Activated T-helper 2 cell treated with anti-CD3 and anti-CD28 coated beads, Interferon-gamma antibody, Interleukin-2, Interleukin-4, amounts not matched to agents 10 μg/mL and 5 μg/mL and 100 μg/mL, durations not matched to agents 14 hours and 24 hours and 36 hours (primary cell): ENCODE measurements at regions of chr4 and their contacts with region 1.

Region 1: DNA sequence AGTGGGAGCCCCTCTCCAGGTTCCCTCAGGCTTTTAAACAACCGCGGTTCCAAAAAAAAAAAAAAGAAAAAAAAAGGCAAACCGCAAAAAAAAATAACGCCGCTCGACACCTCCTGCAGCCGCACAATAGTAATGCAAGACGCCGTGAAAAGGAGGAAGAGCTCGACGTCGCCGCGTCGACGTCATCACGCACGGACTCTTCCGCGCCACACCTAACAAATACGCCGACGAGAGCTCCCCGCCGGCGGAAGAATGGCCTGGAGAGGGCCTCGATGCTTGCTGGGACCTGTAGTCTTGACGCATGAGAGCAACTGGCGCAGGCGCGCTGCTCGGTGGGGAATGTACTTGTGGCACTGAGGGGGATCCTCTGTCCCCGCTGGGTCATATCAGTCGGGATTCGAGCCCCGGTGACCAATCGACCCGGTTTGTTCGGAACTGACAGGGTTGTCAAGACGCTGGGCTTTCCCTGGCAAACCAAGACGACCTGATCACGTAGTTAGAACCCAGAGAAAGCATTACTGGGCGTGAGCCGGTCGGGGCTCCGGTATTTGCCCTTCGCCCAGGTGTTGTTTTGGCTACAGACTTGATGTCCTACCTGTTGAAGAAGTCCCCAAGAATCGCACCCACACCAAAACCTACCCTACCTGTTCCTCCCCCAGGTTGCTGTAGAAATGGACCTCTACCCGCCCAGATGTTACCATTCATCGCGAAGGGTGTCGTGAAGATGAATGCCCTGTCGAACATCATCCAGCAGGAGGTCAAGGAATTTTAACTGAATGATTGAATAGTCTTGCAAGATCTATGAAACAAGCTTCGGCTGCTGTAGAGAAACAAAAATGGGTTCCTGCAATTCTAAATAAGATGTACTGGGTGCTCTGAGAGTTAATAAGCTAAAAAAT is at the start of gene CBR4:
- DNase-seq: peak; percentile 94
- H3K4me3 Mint-ChIP-seq: peak within 1 kb of the TSS; percentile 94
- H3K27ac Mint-ChIP-seq: peak within 1 kb of the TSS; percentile 94
- H3K4me1 Mint-ChIP-seq: peaks cover 33% of the 10 kb centered on the region
- H3K27me3 Mint-ChIP-seq: peaks cover 9% of the 10 kb centered on the region
- total RNA-seq, gene CBR4: 17.8 and 21.6 TPM in 2 replicates

Region 2: DNA sequence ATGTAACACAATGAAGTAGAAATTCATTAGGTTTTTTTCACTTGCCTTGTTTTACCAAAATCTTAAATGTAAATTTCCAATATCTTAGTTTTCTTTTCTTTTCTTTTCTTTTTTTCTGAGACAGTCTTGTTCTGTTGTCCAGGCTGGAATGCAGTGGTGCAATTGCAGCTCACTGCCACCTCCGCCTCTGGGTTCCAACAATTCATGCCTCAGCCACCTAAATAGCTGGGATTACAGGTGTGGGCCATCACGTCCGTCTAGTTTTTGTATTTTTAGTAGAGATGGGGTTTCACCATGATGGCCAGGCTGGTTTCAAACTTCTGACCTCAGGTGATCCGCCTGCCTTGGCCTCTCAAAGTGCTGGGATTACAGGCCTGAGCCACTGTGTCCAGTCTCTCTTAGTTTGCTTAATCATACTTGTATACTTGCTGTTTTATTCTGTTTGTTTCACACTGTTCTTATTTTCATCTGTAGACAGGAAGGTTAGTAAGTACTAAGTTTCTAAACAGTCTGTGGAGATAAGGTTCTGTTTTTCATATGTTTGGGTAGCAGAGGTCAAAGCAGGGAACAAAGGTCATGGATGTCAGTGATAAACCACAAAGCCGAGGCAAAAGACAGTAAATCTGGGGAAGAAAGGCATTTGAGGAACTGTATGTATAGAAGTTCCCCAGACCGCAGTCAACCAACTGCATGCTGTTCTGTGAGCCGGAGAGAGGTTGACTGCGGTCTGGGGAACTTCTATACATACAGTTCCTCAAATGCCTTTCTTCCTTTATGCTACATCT is 129.4 kb before region 1 on chr4:
- intact Hi-C with region 1: no loop called
- DNase-seq: no peak
- H3K4me3 Mint-ChIP-seq: no peak overlapping the region
- H3K27ac Mint-ChIP-seq: peak overlapping the region; percentile 21
- H3K4me1 Mint-ChIP-seq: peaks cover 26% of the 10 kb centered on the region
- H3K27me3 Mint-ChIP-seq: peaks cover 25% of the 10 kb centered on the region

Region 3: GRCh38 chr4:168923526-168924194 is 86.7 kb before region 1 on chr4:
- intact Hi-C with region 1: loop called (anchors 1 kb)
- DNase-seq: peak; percentile 20
- H3K4me3 Mint-ChIP-seq: no peak overlapping the region
- H3K27ac Mint-ChIP-seq: no peak overlapping the region
- H3K4me1 Mint-ChIP-seq: no peaks in the 10 kb centered on the region
- H3K27me3 Mint-ChIP-seq: no peaks in the 10 kb centered on the region

Region 4: DNA sequence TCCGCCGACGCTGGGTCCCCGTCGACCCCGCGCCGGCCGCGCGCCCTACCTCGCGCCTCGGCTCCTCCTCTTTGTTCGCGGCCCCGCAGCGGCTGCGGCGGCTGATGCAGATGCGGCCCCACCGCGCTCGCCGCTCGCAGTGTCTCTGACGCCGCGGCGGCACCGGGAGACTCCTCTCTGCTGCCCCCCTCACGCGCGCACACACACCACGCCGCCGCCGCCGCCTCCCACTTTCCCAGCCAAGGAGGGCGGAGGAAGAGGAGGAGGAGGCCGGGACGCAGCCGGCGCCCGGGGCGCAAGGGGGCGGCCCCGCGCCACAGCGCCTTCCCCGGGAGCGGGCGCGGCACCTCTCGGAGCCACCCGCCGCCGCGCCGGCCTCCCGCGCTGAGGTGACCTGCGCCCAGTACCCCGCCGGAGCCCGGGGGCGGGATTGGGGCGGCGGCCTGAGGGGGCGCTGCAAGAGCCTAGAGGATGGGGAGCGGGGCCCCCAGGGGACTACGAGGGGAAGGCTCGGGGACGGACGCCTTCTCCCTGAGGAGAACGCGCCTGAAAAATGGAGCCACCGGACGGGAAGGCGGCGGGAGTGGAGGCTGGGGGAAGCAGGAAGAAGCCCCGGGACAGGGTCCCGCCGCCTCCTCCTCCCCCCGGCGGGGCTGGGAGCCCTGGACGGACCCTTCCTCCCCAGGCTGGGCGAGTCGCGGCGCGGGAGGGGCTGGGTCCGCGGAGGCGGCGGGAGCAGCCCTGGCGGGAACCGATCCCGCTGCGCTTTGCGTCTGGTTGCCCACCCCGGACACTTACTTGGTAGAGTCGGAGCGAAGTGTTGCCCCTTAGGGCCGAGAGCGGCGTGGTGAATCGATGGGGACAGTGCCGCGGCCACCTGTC is 260.7 kb after region 1 on chr4 and contains the start of gene SH3RF1:
- intact Hi-C with region 1: loop called (anchors 5 kb)
- DNase-seq: peak; percentile 13
- H3K4me3 Mint-ChIP-seq: peak within 1 kb of the TSS; percentile 75
- H3K27ac Mint-ChIP-seq: no peak within 1 kb of the TSS
- H3K4me1 Mint-ChIP-seq: peaks cover 9% of the 10 kb centered on the region
- H3K27me3 Mint-ChIP-seq: peaks cover 61% of the 10 kb centered on the region
- total RNA-seq, gene SH3RF1: 1.1 and 1.4 TPM in 2 replicates

Region 5: GRCh38 chr4:169485791-169486742 is 475.7 kb after region 1 on chr4:
- intact Hi-C with region 1: loop called (anchors 5 kb)
- DNase-seq: no peak
- H3K4me3 Mint-ChIP-seq: no peak overlapping the region
- H3K27ac Mint-ChIP-seq: no peak overlapping the region
- H3K4me1 Mint-ChIP-seq: peaks cover 5% of the 10 kb centered on the region
- H3K27me3 Mint-ChIP-seq: no peaks in the 10 kb centered on the region

Region 6: DNA sequence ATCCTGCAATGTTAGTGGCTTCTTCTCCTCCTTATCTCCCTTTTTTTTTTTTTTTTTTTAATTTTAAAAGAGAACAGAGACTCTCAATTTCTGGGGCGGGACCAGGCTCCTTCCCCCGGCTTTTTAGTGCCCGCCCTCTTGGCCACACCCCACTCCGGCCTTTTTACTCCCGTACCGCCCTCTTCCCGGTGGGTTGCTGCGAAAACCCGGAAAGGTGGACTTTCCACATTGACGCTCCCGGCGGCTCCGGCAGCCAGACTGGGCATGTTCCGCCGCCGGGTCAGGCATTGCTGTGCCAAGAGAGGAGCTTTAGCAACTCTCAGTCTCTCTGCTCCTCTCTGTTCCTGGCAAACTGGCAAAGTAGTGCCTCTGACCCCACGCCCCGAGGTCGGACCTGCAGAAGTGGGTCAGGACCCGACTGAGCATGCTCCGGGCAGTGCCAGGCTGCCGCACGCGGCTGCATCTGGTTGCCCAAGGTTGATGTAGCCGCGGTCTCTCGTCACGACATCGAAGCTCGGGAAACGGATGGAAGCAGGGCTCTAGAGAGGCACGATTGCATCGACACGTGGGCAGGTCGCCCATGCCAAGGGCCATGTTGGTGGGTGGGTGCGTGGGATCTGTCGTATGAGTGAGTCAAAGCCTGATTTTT is 1016.9 kb after region 1 on chr4:
- intact Hi-C with region 1: loop called (anchors 1 kb)
- DNase-seq: peak; percentile 83
- H3K4me3 Mint-ChIP-seq: peak overlapping the region; percentile 79
- H3K27ac Mint-ChIP-seq: peak overlapping the region; percentile 63
- H3K4me1 Mint-ChIP-seq: peaks cover 7% of the 10 kb centered on the region
- H3K27me3 Mint-ChIP-seq: peaks cover 51% of the 10 kb centered on the region